SK-N-SH (cell line): ENCODE measurements at regions of chr5 and their contacts with region 1.

Region 1: DNA sequence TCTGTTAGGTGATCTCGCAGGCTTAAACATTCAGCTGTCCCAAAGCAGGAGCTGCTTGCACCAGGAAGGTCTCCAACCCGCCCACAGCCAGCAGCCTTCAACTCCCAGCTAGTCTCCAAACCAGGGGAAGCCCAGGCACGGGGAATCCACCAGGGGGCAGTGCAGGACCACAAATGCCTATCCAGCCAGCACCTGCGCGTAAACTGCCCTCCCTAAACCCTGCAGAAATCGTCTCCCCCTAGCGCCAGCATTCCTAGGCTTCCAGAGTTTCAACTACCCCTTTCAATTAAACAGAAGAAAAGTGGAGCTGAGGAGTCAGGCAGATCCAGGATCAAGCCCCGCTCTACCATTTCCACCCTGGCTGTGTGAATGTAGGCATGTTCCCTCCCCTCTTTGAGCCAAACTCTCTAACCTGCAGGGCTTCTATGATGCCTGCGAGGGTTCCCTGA is 72.0 kb downstream of the HRH2 start:
- DNase-seq: peak; percentile 92
- H3K4me3 ChIP-seq: peak overlapping the region; percentile 23 to 39; a peak in 2 of 4 replicates
- H3K27ac ChIP-seq: no peak overlapping the region
- H3K4me1 ChIP-seq: peaks cover 0 to 8% of the 10 kb centered on the region in 2 experiments; a peak in 1 of 4 replicates
- H3K27me3 ChIP-seq: no peaks in the 10 kb centered on the region
- CTCF ChIP-seq: peak; percentile 97
- EP300 ChIP-seq: no peak
- RAD21 ChIP-seq: peak; percentile 99

Region 2: GRCh38 chr5:174951146-174951780 is 778.6 kb before region 1 on chr5:
- CTCF ChIA-PET with region 1: interaction called, 10 read pairs
- POLR2A ChIA-PET with region 1: no interaction called
- DNase-seq: peak; percentile 75
- H3K4me3 ChIP-seq: no peak overlapping the region; a peak in 1 of 4 replicates
- H3K27ac ChIP-seq: no peak overlapping the region
- H3K4me1 ChIP-seq: no peaks in the 10 kb centered on the region
- H3K27me3 ChIP-seq: no peaks in the 10 kb centered on the region
- CTCF ChIP-seq: peak; percentile 87
- EP300 ChIP-seq: no peak
- RAD21 ChIP-seq: peak; percentile 94

Region 3: DNA sequence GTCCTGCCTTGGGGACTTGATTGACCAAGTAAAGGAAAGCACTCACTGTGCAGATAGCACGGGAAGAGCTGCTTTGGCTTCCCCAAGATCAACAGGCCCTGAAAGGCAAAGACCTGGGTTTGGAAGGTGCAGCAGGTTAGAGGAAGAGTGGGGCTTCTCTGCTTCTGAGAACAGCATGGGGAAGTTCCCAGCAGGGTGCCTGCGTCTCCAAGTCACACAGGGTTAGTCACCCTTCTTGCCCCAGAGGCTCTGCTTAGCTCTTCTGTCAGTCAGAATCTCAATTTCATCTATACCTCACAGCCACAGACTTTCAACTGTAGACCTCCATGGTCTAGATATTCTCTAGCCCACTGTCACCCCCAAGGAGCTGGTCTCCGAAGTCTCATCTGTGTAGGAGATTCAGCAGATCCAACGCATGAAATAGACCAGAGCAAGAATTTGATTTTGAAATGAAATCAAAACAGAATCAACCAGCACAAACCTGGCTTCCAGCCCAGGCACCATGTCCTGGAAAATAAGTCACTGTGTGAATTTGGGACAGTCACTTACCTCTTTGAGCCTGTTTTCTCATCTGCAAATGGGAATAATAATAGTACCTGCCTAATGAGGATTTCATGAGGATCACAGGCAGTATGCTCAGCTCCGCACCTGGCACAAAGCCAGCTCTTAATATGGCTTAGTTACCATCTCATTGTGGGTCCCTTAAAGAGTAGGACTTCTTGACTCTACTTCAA is 187.5 kb before region 1 on chr5:
- CTCF ChIA-PET with region 1: interaction called, 235 read pairs
- POLR2A ChIA-PET with region 1: no interaction called
- DNase-seq: no peak
- H3K4me3 ChIP-seq: no peak overlapping the region
- H3K27ac ChIP-seq: no peak overlapping the region
- H3K4me1 ChIP-seq: peaks cover 0 to 6% of the 10 kb centered on the region in 2 experiments; a peak in 1 of 4 replicates
- H3K27me3 ChIP-seq: no peaks in the 10 kb centered on the region; the same call in 1 of the 2 replicates
- CTCF ChIP-seq: no peak
- EP300 ChIP-seq: no peak
- RAD21 ChIP-seq: no peak

Region 4: GRCh38 chr5:175623088-175623487 is 106.8 kb before region 1 on chr5:
- CTCF ChIA-PET with region 1: no interaction called
- POLR2A ChIA-PET with region 1: no interaction called
- DNase-seq: no peak
- H3K4me3 ChIP-seq: no peak overlapping the region
- H3K27ac ChIP-seq: no peak overlapping the region
- H3K4me1 ChIP-seq: no peaks in the 10 kb centered on the region
- H3K27me3 ChIP-seq: no peaks in the 10 kb centered on the region
- CTCF ChIP-seq: no peak
- EP300 ChIP-seq: no peak
- RAD21 ChIP-seq: no peak

Region 5: DNA sequence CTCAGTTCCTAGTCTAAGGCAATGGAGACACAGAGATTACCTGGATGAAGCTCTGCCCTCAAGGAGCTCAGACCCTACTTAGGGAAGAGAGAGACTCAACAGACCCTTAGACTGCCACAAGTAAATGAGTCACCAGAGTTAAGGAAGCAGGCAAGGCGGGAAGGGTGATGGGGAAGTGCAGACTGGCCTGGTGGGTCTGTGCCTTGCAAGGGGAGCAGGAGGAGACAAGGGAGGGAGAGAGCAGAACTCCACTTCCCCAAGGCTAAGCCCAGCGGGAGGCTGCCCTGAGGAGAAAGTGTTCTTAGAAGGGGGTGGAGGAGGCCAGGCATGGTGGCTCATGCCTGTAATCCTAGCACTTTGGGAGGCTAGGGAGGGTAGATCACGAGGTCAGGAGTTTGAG is 11.7 kb after region 1 on chr5:
- CTCF ChIA-PET with region 1: interaction called, 64 read pairs
- POLR2A ChIA-PET with region 1: no interaction called
- DNase-seq: no peak
- H3K4me3 ChIP-seq: no peak overlapping the region
- H3K27ac ChIP-seq: no peak overlapping the region
- H3K4me1 ChIP-seq: no peaks in the 10 kb centered on the region
- H3K27me3 ChIP-seq: no peaks in the 10 kb centered on the region
- CTCF ChIP-seq: no peak
- EP300 ChIP-seq: no peak
- RAD21 ChIP-seq: no peak

Region 6: DNA sequence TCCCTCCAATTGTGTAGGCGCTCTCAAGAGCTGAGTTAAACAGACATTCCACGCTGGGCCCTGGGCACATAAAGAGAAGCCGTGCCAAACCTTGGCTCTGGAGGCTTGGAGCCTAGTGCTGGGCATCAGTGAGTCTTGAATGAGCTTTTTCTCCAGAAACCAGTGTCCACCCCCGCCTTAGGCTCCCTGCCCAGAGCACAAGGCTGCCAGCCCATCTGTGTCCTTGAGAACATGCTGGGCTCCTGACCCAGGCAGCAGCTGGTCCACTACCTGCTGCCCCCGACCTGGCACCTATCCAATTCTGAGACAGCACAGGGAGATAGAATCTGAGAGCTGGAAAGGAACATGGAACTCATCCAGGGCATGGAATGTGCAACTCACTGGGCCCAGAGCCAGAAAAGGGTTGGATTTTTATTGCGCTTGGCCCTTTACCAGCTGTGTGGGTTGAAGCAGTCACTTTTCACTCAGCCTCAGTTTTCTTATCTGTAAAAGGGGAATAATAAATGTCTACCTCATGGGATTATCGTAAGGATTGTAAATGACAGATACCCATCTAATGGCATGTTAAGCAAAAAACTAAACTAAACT is 49.2 kb after region 1 on chr5:
- CTCF ChIA-PET with region 1: interaction called, 20 read pairs
- POLR2A ChIA-PET with region 1: no interaction called
- DNase-seq: peak; percentile 89
- H3K4me3 ChIP-seq: no peak overlapping the region
- H3K27ac ChIP-seq: peak overlapping the region in 1 of 2 experiments; percentile 6; a peak in 1 of 4 replicates
- H3K4me1 ChIP-seq: peaks cover 0 to 4% of the 10 kb centered on the region in 2 experiments; a peak in 2 of 4 replicates
- H3K27me3 ChIP-seq: no peaks in the 10 kb centered on the region
- CTCF ChIP-seq: no peak
- EP300 ChIP-seq: peak; percentile 34 to 88; a peak in 3 of 4 replicates
- RAD21 ChIP-seq: peak; percentile 13; the same call in 1 of the 2 replicates

Region 7: DNA sequence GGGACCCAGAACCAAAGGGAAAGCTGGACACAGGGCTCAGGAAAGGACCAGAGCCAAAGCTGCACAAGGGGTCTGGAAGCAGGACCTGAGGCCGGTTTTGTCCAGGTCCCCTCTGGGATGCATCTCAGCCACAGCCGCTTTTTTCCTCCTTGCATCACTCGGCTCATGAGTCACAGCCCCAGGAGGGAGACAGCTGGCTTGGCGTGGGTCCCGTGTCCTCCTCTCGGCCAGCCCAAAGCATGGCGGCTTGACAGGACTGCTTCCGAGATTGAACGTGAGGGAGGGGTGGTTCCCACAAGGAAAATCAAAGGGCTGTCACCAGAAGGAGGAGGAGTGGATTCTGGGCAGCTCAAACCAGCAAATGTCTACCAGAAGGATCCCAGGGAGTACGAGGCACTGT is 84.8 kb after region 1 on chr5:
- CTCF ChIA-PET with region 1: interaction called, 12 read pairs
- POLR2A ChIA-PET with region 1: no interaction called
- DNase-seq: peak; percentile 67
- H3K4me3 ChIP-seq: no peak overlapping the region
- H3K27ac ChIP-seq: peak overlapping the region in 1 of 2 experiments; percentile 62; a peak in 2 of 4 replicates
- H3K4me1 ChIP-seq: peaks cover 4 to 15% of the 10 kb centered on the region in 2 experiments; a peak in 2 of 4 replicates
- H3K27me3 ChIP-seq: no peaks in the 10 kb centered on the region
- CTCF ChIP-seq: no peak
- EP300 ChIP-seq: peak in 1 of 2 experiments; percentile 17; a peak in 1 of 4 replicates
- RAD21 ChIP-seq: no peak

Region 8: DNA sequence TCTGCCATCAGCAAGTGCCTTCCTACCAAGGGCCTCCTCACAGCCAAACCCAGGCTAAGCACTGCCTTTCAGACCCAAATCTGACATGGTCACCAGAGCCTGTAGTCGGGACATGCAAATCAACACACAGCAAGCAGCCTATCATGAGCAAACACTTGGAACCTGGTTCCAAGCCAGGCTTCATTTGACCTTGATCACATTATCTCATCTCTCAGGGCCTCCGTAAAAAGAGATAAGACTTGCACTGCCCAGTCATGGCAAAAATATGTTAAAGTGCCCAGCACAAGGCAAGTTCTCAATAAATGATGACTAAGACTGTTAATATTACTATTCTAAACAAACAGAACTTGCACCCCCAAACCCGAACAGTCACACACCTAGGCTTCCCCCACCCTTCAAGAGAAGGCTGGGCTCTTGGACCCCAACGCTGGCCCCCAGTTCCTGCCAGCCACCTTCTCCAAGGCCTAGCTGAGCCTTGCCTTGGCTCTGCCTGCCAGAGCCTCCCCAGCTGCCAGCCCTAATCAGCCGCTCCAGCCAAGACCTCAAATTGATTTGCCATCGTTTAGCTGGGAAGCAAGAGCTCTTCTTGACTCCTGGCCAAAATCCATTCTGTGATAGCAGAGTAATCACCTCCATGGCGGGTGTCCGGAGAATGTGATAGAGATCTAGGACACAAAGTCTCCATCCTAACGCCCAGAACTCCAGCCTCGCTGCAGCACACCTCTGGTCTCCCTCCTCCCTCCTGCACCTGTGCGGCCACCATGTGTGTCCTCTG is 160.2 kb after region 1 on chr5:
- CTCF ChIA-PET with region 1: interaction called, 44 read pairs
- POLR2A ChIA-PET with region 1: no interaction called
- DNase-seq: peak; percentile 69
- H3K4me3 ChIP-seq: no peak overlapping the region
- H3K27ac ChIP-seq: peak overlapping the region in 1 of 2 experiments; percentile 70; a peak in 2 of 4 replicates
- H3K4me1 ChIP-seq: peaks cover 0 to 31% of the 10 kb centered on the region in 2 experiments; a peak in 1 of 4 replicates
- H3K27me3 ChIP-seq: no peaks in the 10 kb centered on the region
- CTCF ChIP-seq: no peak
- EP300 ChIP-seq: peak in 1 of 2 experiments; percentile 43; a peak in 1 of 4 replicates
- RAD21 ChIP-seq: peak; percentile 10; the same call in 1 of the 2 replicates